ENCODE measurements at regions of chr7 and their contacts with region 1.

Region 1: DNA sequence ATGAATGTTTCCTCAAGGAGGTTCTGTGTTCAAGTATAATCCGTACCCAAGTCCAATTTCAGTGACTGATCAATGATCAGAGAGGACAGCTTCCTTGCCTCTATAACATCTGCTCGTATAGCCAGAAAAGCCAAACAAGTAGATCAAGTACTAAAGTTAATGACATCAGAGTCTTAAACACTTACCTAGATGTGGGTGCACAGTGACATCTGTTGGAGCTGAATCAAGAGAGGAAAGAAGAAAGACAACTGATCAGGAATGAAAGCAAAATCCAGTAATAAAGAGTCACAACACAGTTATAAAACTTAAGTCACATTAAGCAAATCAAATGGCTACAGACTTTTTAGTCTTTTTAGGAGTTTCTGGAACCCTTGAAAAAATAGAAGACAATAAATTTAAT is 236.5 kb downstream of the RELN start:
- DNase-seq: peak in 1 of 2 experiments; percentile 32
- H3K4me3 ChIP-seq: no peak overlapping the region
- H3K4me3 Mint-ChIP-seq: no peak overlapping the region
- H3K27ac Mint-ChIP-seq: no peak overlapping the region
- H3K4me1 ChIP-seq: no peaks in the 10 kb centered on the region
- H3K4me1 Mint-ChIP-seq: no peaks in the 10 kb centered on the region
- H3K27me3 ChIP-seq: no peaks in the 10 kb centered on the region
- H3K27me3 Mint-ChIP-seq: no peaks in the 10 kb centered on the region
- CTCF ChIP-seq: peak; percentile 28 to 45

Region 2: GRCh38 chr7:103344453-103345149 is 408.4 kb before region 1 on chr7 and contains the start of gene DNAJC2:
- CTCF ChIA-PET with region 1: no interaction called
- POLR2A ChIA-PET with region 1: no interaction called
- intact Hi-C with region 1: no loop called
- DNase-seq: peak; percentile 86 to 91
- H3K4me3 ChIP-seq: peak within 1 kb of the TSS; percentile 84
- H3K4me3 Mint-ChIP-seq: peak within 1 kb of the TSS; percentile 100
- H3K27ac Mint-ChIP-seq: peak within 1 kb of the TSS; percentile 99
- H3K4me1 ChIP-seq: peaks cover 20% of the 10 kb centered on the region; the same call in 1 of the 2 replicates
- H3K4me1 Mint-ChIP-seq: peaks cover 21% of the 10 kb centered on the region
- H3K27me3 ChIP-seq: no peaks in the 10 kb centered on the region
- H3K27me3 Mint-ChIP-seq: no peaks in the 10 kb centered on the region
- CTCF ChIP-seq: no peak
- total RNA-seq, gene DNAJC2: 71.6 and 73.0 TPM in 2 replicates

Region 3: DNA sequence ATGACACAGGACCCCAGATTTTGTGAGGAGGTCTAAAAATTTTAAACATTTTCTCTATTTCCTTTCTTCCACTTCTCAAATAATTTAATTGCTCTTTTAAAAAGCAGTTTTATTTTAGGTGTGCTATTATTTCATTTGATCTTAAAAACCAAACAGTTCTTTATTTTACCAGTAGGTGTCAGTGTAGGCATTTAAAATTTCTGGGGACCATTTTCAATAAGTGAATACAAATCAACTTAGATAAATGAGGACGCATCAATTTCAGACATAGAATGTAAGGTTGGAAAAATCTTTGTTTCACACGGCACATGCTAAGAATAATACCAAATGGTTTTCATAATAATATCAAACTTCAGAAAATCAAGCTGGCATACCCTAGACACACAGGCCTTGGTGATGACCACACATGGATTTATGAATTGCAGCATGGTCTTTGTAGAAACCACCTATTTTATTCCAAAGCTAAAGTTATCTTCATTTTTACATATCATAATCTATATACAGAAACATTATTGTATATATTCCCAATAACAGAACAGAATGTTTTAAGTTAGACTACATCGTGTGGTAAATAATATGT is 179.4 kb before region 1 on chr7:
- CTCF ChIA-PET with region 1: interaction called, 4 read pairs
- POLR2A ChIA-PET with region 1: no interaction called
- intact Hi-C with region 1: loop called (anchors 1 kb)
- DNase-seq: peak in 1 of 2 experiments; percentile 19
- H3K4me3 ChIP-seq: no peak overlapping the region
- H3K4me3 Mint-ChIP-seq: no peak overlapping the region
- H3K27ac Mint-ChIP-seq: no peak overlapping the region
- H3K4me1 ChIP-seq: peaks cover 36% of the 10 kb centered on the region
- H3K4me1 Mint-ChIP-seq: peaks cover 36% of the 10 kb centered on the region
- H3K27me3 ChIP-seq: no peaks in the 10 kb centered on the region
- H3K27me3 Mint-ChIP-seq: no peaks in the 10 kb centered on the region
- CTCF ChIP-seq: peak; percentile 40 to 54

Region 4: GRCh38 chr7:103777440-103777839 is 24.4 kb after region 1 on chr7:
- CTCF ChIA-PET with region 1: no interaction called
- POLR2A ChIA-PET with region 1: no interaction called
- intact Hi-C with region 1: no loop called
- DNase-seq: no peak
- H3K4me3 ChIP-seq: no peak overlapping the region
- H3K4me3 Mint-ChIP-seq: no peak overlapping the region
- H3K27ac Mint-ChIP-seq: no peak overlapping the region
- H3K4me1 ChIP-seq: no peaks in the 10 kb centered on the region
- H3K4me1 Mint-ChIP-seq: no peaks in the 10 kb centered on the region
- H3K27me3 ChIP-seq: no peaks in the 10 kb centered on the region
- H3K27me3 Mint-ChIP-seq: no peaks in the 10 kb centered on the region
- CTCF ChIP-seq: no peak